ENCODE measurements at regions of chr10 and their contacts with region 1.

Region 1: DNA sequence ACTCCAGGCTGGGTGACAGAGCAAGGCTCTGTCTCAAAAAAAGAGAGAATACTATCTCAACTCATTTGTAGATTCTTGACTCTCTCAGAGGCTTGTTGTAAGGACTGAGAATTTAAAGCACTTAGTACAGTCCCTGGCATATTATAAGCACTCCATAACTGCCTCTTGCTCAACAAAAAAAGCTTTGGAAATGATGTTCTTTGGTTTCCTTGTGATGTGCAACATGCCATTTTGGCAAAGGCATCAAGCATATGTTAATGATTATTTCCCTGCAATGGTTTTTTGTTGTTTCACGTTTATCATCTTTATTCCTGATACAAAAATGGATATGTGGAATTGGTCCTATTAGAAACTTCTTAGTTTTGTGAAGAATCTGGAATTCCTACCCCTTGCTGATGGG is 15.7 kb downstream of the NOLC1 start:
- DNase-seq: no peak
- ATAC-seq: no peak
- H3K4me3 ChIP-seq: no peak overlapping the region
- H3K4me3 Mint-ChIP-seq: no peak overlapping the region
- H3K27ac ChIP-seq: no peak overlapping the region
- H3K27ac Mint-ChIP-seq: no peak overlapping the region
- H3K4me1 ChIP-seq: peaks cover 9% of the 10 kb centered on the region
- H3K4me1 Mint-ChIP-seq: peaks cover 0 to 9% of the 10 kb centered on the region in 2 donors
- H3K27me3 ChIP-seq: no peaks in the 10 kb centered on the region
- H3K27me3 Mint-ChIP-seq: no peaks in the 10 kb centered on the region
- CTCF ChIP-seq: no peak

Region 2: DNA sequence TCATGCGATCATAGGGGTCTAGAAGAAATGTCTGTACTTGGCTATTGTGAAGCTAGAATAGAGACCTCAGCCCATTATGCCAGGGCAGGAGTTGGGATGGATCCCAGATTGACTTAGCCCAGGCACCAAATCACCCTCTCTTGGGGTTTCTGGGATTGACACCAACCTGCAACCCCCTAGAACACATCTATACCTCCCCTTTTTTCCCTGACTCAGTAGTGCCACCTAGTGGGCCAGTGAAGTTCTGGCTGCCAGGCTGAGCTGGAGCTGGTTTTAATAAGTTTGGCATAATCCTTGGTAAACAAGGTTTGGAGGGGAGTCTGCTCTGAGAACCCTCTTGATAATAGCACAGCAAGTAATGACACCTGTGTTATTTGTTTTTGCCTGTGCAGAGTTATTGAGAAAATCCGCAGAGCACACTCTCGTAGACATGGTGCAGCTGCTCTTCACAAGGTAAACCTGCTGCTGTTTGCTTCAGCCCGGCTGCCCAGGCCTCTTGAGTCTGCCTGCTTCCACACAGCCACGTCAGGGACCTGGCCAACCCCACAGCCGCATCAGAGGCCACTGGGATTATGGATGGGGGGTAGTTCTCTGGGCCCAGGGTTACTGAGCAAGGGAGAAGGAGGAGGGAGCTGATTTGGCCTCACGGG is 184.3 kb after region 1 on chr10:
- intact Hi-C with region 1: loop called (anchors 1 kb)
- DNase-seq: peak; percentile 59 to 85
- ATAC-seq: peak; percentile 76 to 91 (median 81)
- H3K4me3 ChIP-seq: no peak overlapping the region
- H3K4me3 Mint-ChIP-seq: no peak overlapping the region
- H3K27ac ChIP-seq: no peak overlapping the region
- H3K27ac Mint-ChIP-seq: no peak overlapping the region
- H3K4me1 ChIP-seq: no peaks in the 10 kb centered on the region
- H3K4me1 Mint-ChIP-seq: no peaks in the 10 kb centered on the region
- H3K27me3 ChIP-seq: no peaks in the 10 kb centered on the region
- H3K27me3 Mint-ChIP-seq: no peaks in the 10 kb centered on the region
- CTCF ChIP-seq: peak; percentile 90

Region 3: GRCh38 chr10:102368072-102368471 is 200.2 kb after region 1 on chr10:
- intact Hi-C with region 1: no loop called
- DNase-seq: no peak
- ATAC-seq: no peak
- H3K4me3 ChIP-seq: no peak overlapping the region
- H3K4me3 Mint-ChIP-seq: no peak overlapping the region
- H3K27ac ChIP-seq: no peak overlapping the region
- H3K27ac Mint-ChIP-seq: no peak overlapping the region
- H3K4me1 ChIP-seq: no peaks in the 10 kb centered on the region
- H3K4me1 Mint-ChIP-seq: no peaks in the 10 kb centered on the region
- H3K27me3 ChIP-seq: no peaks in the 10 kb centered on the region
- H3K27me3 Mint-ChIP-seq: no peaks in the 10 kb centered on the region
- CTCF ChIP-seq: no peak

Region 4: GRCh38 chr10:102583435-102584417 is 415.9 kb after region 1 on chr10:
- intact Hi-C with region 1: loop called (anchors 1 kb)
- DNase-seq: peak; percentile 69 to 91
- ATAC-seq: peak; percentile 91 to 99 (median 98)
- H3K4me3 ChIP-seq: no peak overlapping the region
- H3K4me3 Mint-ChIP-seq: no peak overlapping the region
- H3K27ac ChIP-seq: no peak overlapping the region
- H3K27ac Mint-ChIP-seq: no peak overlapping the region
- H3K4me1 ChIP-seq: peaks cover 4% of the 10 kb centered on the region
- H3K4me1 Mint-ChIP-seq: peaks cover 0 to 1% of the 10 kb centered on the region in 2 donors
- H3K27me3 ChIP-seq: no peaks in the 10 kb centered on the region
- H3K27me3 Mint-ChIP-seq: no peaks in the 10 kb centered on the region
- CTCF ChIP-seq: peak; percentile 88

Measured in natural killer cell (primary cell).